IMR-90 (cell line): ENCODE measurements at regions of chr16 and their contacts with region 1.

Region 1: GRCh38 chr16:71214746-71215381 is 15.7 kb downstream of the HYDIN start:
- DNase-seq: no peak
- ATAC-seq: no peak
- H3K4me3 ChIP-seq: no peak overlapping the region
- H3K27ac ChIP-seq: no peak overlapping the region
- H3K4me1 ChIP-seq: no peaks in the 10 kb centered on the region
- H3K27me3 ChIP-seq: no peaks in the 10 kb centered on the region
- CTCF ChIP-seq: no peak
- POLR2A ChIP-seq: no peak
- RAD21 ChIP-seq: no peak

Region 2: GRCh38 chr16:71283612-71284011 is 68.7 kb after region 1 on chr16:
- CTCF ChIA-PET with region 1: no interaction called
- POLR2A ChIA-PET with region 1: no interaction called
- dilution Hi-C with region 1: no loop called
- in situ Hi-C with region 1: no loop called
- intact Hi-C with region 1: loop called (anchors 2 kb)
- DNase-seq: no peak
- ATAC-seq: no peak
- H3K4me3 ChIP-seq: no peak overlapping the region
- H3K27ac ChIP-seq: no peak overlapping the region
- H3K4me1 ChIP-seq: no peaks in the 10 kb centered on the region
- H3K27me3 ChIP-seq: no peaks in the 10 kb centered on the region
- CTCF ChIP-seq: no peak
- POLR2A ChIP-seq: no peak
- RAD21 ChIP-seq: no peak